ENCODE measurements at regions of chr17 and their contacts with region 1.

Region 1: DNA sequence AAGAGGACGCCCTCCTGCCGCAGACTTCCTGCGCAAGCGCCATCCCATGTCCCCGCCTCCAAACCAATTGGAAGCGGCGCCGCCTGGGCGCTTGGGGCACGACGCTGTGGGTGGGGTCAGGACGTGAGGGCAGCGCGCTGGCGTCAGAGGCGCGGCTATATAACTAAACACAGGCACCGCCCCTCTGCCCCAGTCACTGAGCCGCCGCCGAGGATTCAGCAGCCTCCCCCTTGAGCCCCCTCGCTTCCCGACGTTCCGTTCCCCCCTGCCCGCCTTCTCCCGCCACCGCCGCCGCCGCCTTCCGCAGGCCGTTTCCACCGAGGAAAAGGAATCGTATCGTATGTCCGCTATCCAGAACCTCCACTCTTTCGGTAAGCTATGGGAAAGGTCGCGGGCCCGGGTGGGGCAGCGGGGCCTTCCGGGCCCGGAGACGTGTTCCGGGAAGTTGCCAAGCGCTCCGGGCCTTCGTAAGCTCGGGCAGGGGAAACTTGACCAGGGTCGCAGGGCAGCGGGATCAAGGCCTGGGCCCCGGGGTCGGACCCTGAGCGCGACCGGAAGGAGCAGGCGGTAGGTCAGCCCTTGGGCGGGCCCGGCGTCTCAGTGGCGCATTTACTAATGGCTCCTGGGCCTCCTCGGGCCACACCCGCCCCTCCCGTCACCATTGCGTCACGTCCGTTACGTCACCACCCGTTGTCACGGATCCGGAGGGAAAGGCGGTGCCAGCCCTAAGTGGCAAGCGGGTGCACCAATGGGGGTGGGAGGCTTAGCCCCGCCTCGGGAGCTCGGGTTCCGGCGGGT is at the start of gene EIF1:
- DNase-seq: peak; percentile 99 to 100 (median 100)
- ATAC-seq: peak; percentile 74
- H3K4me3 ChIP-seq: peak within 1 kb of the TSS; percentile 81
- H3K4me3 Mint-ChIP-seq: peak within 1 kb of the TSS; percentile 99
- H3K27ac ChIP-seq: peak within 1 kb of the TSS; percentile 99 to 100
- H3K27ac Mint-ChIP-seq: peak within 1 kb of the TSS; percentile 100
- H3K4me1 ChIP-seq: peaks cover 36% of the 10 kb centered on the region
- H3K4me1 Mint-ChIP-seq: peaks cover 50% of the 10 kb centered on the region
- H3K27me3 ChIP-seq: no peaks in the 10 kb centered on the region
- H3K27me3 Mint-ChIP-seq: peaks cover 10% of the 10 kb centered on the region
- CTCF ChIP-seq: no peak
- total RNA-seq, gene EIF1: 3,351 to 3,391 TPM

Region 2: DNA sequence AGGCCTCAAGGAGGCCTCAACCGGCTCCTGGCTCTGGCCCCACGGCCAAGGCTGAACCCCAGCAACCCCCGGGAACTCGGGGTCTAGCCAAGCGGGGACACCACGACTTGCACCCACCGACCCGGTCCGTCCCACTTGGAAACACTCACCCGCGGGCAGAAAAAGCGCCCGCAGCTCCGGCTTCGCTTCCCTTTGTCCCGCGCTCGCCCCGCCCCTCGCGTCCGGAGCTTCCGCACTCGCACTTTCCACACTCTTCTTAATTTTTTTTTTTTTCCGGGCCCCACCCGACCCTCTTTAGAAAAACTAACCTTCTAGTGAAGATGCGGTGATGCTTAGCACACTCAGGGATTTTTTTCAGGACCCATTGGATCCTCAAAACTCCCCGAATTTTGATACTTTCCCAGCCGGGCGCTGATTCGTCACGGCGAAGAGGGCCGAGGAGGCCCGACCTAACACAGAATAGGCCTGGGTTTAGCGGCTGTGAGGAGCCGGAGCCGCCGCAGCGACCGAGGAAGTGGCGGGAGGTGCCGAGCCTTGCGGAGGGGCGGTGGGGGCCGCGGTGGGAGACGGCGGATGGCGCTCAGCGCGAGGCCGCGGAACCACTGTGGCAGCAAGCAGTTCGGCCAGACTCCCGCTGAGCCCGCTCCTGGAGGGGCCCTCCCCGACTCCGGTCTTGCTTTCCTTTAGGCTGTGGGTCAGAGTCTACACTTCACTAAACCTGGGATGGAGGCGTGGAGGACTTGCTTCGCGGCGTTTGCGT is 1041.1 kb before region 1 on chr17 and contains the start of gene SMARCE1:
- CTCF ChIA-PET with region 1: no interaction called
- POLR2A ChIA-PET with region 1: interaction called, 20 read pairs
- intact Hi-C with region 1: loop called in 1 of 2 experiments (anchors 10 kb)
- DNase-seq: peak; percentile 52 to 87 (median 67)
- ATAC-seq: peak; percentile 66
- H3K4me3 ChIP-seq: peak within 1 kb of the TSS; percentile 89
- H3K4me3 Mint-ChIP-seq: peak within 1 kb of the TSS; percentile 93
- H3K27ac ChIP-seq: peak within 1 kb of the TSS; percentile 95 to 98
- H3K27ac Mint-ChIP-seq: peak within 1 kb of the TSS; percentile 97
- H3K4me1 ChIP-seq: peaks cover 19% of the 10 kb centered on the region
- H3K4me1 Mint-ChIP-seq: peaks cover 51% of the 10 kb centered on the region
- H3K27me3 ChIP-seq: no peaks in the 10 kb centered on the region
- H3K27me3 Mint-ChIP-seq: no peaks in the 10 kb centered on the region
- CTCF ChIP-seq: no peak
- total RNA-seq, gene SMARCE1: 65.4 to 68.6 TPM

Region 3: GRCh38 chr17:41308251-41308917 is 380.5 kb before region 1 on chr17:
- CTCF ChIA-PET with region 1: no interaction called
- POLR2A ChIA-PET with region 1: interaction called, 22 read pairs
- intact Hi-C with region 1: no loop called
- DNase-seq: peak; percentile 71 to 96 (median 84)
- ATAC-seq: peak; percentile 82
- H3K4me3 ChIP-seq: peak overlapping the region; percentile 36
- H3K4me3 Mint-ChIP-seq: peak overlapping the region; percentile 81
- H3K27ac ChIP-seq: peak overlapping the region; percentile 69 to 83
- H3K27ac Mint-ChIP-seq: peak overlapping the region; percentile 98
- H3K4me1 ChIP-seq: peaks cover 55% of the 10 kb centered on the region
- H3K4me1 Mint-ChIP-seq: peaks cover 69% of the 10 kb centered on the region
- H3K27me3 ChIP-seq: no peaks in the 10 kb centered on the region
- H3K27me3 Mint-ChIP-seq: no peaks in the 10 kb centered on the region
- CTCF ChIP-seq: no peak

Region 4: DNA sequence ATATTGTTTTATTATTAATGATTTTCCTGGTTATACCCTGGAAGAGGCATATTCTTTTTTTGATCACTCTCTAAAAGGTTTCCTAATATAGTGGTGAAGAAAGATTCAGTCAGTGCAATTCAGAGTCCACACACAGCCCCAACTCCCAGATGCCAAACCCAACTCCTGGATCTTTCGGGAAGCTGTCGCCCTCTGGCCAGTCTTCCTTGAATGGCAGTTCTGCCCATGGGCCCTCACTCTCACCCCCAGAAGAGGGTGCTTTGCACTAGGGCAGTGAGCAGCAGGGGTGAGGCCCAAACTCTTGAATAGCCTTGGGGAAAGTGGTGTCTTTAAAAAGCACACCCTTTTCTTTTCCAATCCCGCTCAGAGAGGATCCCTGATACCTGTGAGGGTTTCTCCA is 232.7 kb before region 1 on chr17:
- CTCF ChIA-PET with region 1: no interaction called
- POLR2A ChIA-PET with region 1: no interaction called
- intact Hi-C with region 1: no loop called
- DNase-seq: no peak
- ATAC-seq: no peak
- H3K4me3 ChIP-seq: no peak overlapping the region
- H3K4me3 Mint-ChIP-seq: no peak overlapping the region
- H3K27ac ChIP-seq: no peak overlapping the region
- H3K27ac Mint-ChIP-seq: no peak overlapping the region
- H3K4me1 ChIP-seq: no peaks in the 10 kb centered on the region
- H3K4me1 Mint-ChIP-seq: no peaks in the 10 kb centered on the region
- H3K27me3 ChIP-seq: no peaks in the 10 kb centered on the region
- H3K27me3 Mint-ChIP-seq: peaks cover 3% of the 10 kb centered on the region
- CTCF ChIP-seq: no peak

Region 5: DNA sequence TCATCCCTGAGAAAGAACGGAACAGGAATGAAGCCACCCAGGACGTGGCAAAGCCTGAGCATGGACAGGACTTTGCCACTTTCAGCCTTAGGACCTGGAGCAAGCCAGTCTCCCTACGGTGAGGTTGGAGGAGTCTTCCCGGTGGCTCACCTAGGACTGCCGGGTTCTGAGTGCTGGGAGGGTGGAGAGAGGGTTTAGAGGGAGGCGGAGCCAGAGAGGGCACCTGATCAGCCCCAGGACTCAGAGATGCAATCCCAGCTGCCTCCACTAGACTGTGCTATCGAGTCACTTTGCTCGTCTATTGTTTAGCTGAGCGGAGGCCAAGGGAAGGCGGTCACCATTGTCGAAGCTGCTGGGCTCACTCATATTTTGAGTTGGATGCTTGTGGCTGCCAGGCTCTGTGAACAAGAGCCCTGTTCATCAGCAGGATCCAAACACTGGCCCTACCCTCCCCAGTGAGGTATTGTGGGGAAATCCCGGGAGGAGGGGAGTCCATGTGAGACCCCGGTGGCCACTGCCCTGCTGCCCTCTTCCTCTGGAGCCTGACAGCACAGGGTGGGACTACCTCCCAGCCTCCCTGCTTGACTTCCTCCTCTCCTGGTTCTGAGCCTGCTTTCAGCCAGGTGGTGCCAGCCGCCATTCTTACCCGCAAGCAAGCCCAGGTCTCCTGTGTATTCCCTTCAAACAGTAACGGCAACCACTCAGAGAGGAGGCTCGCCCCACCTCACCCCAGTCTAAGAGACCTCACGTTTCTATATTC is 109.2 kb before region 1 on chr17:
- CTCF ChIA-PET with region 1: no interaction called
- POLR2A ChIA-PET with region 1: no interaction called
- intact Hi-C with region 1: no loop called
- DNase-seq: peak; percentile 23 to 78 (median 47)
- ATAC-seq: peak; percentile 98
- H3K4me3 ChIP-seq: no peak overlapping the region
- H3K4me3 Mint-ChIP-seq: no peak overlapping the region
- H3K27ac ChIP-seq: no peak overlapping the region
- H3K27ac Mint-ChIP-seq: no peak overlapping the region
- H3K4me1 ChIP-seq: no peaks in the 10 kb centered on the region
- H3K4me1 Mint-ChIP-seq: no peaks in the 10 kb centered on the region
- H3K27me3 ChIP-seq: peaks cover 7 to 22% of the 10 kb centered on the region in 2 experiments
- H3K27me3 Mint-ChIP-seq: peaks cover 67% of the 10 kb centered on the region
- CTCF ChIP-seq: no peak

Region 6: GRCh38 chr17:41648411-41649195 is 40.3 kb before region 1 on chr17:
- CTCF ChIA-PET with region 1: interaction called, 13 read pairs
- POLR2A ChIA-PET with region 1: interaction called, 22 read pairs
- intact Hi-C with region 1: no loop called
- DNase-seq: peak; percentile 70 to 92 (median 82)
- ATAC-seq: peak; percentile 88
- H3K4me3 ChIP-seq: peak overlapping the region; percentile 67
- H3K4me3 Mint-ChIP-seq: peak overlapping the region; percentile 86
- H3K27ac ChIP-seq: no peak overlapping the region
- H3K27ac Mint-ChIP-seq: peak overlapping the region; percentile 50
- H3K4me1 ChIP-seq: peaks cover 15% of the 10 kb centered on the region
- H3K4me1 Mint-ChIP-seq: peaks cover 12% of the 10 kb centered on the region
- H3K27me3 ChIP-seq: no peaks in the 10 kb centered on the region
- H3K27me3 Mint-ChIP-seq: no peaks in the 10 kb centered on the region
- CTCF ChIP-seq: peak; percentile 81

Region 7: GRCh38 chr17:41705271-41705991 is 16.5 kb after region 1 on chr17:
- CTCF ChIA-PET with region 1: no interaction called
- POLR2A ChIA-PET with region 1: interaction called, 12 read pairs
- intact Hi-C with region 1: no loop called
- DNase-seq: no peak
- ATAC-seq: no peak
- H3K4me3 ChIP-seq: no peak overlapping the region
- H3K4me3 Mint-ChIP-seq: no peak overlapping the region
- H3K27ac ChIP-seq: no peak overlapping the region
- H3K27ac Mint-ChIP-seq: no peak overlapping the region
- H3K4me1 ChIP-seq: peaks cover 3% of the 10 kb centered on the region
- H3K4me1 Mint-ChIP-seq: peaks cover 6% of the 10 kb centered on the region
- H3K27me3 ChIP-seq: no peaks in the 10 kb centered on the region
- H3K27me3 Mint-ChIP-seq: peaks cover 6% of the 10 kb centered on the region
- CTCF ChIP-seq: no peak

Region 8: DNA sequence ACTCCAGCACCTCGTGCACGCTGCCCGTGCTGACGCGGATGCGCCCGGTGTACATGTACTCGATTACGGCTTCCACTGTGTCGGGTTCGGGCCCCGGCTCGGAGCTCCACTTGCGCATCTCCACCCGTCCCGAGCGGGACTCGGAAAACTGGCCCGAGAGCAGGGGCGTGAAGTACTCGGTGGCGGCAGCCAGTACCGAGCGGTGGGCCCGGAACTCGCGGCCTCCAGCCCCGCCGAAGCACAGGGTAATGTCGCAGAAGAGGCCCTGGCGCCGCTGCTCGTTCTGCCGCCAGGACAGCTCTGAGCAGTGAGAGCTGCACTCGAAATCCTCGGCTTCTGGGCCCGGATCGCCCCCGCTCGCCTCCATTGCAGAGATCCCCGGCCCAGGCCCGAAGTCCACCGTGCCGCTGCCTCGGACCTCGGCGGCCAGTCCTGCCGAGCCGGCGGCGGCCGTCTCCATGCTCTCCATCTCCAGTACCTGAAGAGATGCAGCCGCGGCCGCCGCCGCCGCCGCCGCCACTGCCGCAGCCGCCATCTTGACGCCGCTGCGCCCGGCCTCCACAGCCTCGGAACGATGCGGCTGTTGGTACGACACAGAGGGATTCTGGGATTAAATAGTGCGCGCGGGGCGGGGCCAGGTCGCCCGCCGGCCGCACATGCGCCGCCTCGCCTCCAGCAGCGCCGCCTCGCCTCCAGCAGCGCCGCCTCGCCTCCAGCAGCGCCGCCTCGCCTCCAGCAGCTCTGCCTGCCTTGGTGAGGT is 176.1 kb after region 1 on chr17 and contains the start of gene KLHL11:
- CTCF ChIA-PET with region 1: no interaction called
- POLR2A ChIA-PET with region 1: interaction called, 16 read pairs
- intact Hi-C with region 1: no loop called
- DNase-seq: peak; percentile 79 to 95 (median 84)
- ATAC-seq: peak; percentile 88
- H3K4me3 ChIP-seq: peak within 1 kb of the TSS; percentile 95
- H3K4me3 Mint-ChIP-seq: no peak within 1 kb of the TSS
- H3K27ac ChIP-seq: peak within 1 kb of the TSS; percentile 79 to 87
- H3K27ac Mint-ChIP-seq: no peak within 1 kb of the TSS
- H3K4me1 ChIP-seq: peaks cover 46% of the 10 kb centered on the region
- H3K4me1 Mint-ChIP-seq: peaks cover 20% of the 10 kb centered on the region
- H3K27me3 ChIP-seq: no peaks in the 10 kb centered on the region
- H3K27me3 Mint-ChIP-seq: no peaks in the 10 kb centered on the region
- CTCF ChIP-seq: no peak
- total RNA-seq, gene KLHL11: 32.9 to 34.0 TPM

Region 9: GRCh38 chr17:41930009-41930832 is 241.3 kb after region 1 on chr17 and contains the start of gene ODAD4:
- CTCF ChIA-PET with region 1: no interaction called
- POLR2A ChIA-PET with region 1: interaction called, 13 read pairs
- intact Hi-C with region 1: no loop called
- DNase-seq: peak; percentile 93 to 99 (median 95)
- ATAC-seq: peak; percentile 99
- H3K4me3 ChIP-seq: peak within 1 kb of the TSS; percentile 68
- H3K4me3 Mint-ChIP-seq: peak within 1 kb of the TSS; percentile 91
- H3K27ac ChIP-seq: peak within 1 kb of the TSS; percentile 75 to 92
- H3K27ac Mint-ChIP-seq: peak within 1 kb of the TSS; percentile 89
- H3K4me1 ChIP-seq: peaks cover 23% of the 10 kb centered on the region
- H3K4me1 Mint-ChIP-seq: peaks cover 19% of the 10 kb centered on the region
- H3K27me3 ChIP-seq: no peaks in the 10 kb centered on the region
- H3K27me3 Mint-ChIP-seq: no peaks in the 10 kb centered on the region
- CTCF ChIP-seq: peak; percentile 42
- total RNA-seq, gene ODAD4: 2.2 to 2.7 TPM